HepG2 (cell line): ENCODE measurements at regions of chr2 and their contacts with region 1.

Region 1: GRCh38 chr2:105576440-105577252 is 168.1 kb upstream of the NCK2 start:
- DNase-seq: peak; percentile 54
- ATAC-seq: peak; percentile 77
- H3K4me3 ChIP-seq: 0 out of 6 replicates have a peak overlapping the region, but pooled peaks of 1 of the 3 experiments have one; percentile 21
- H3K27ac ChIP-seq: no peak overlapping the region
- H3K4me1 ChIP-seq: peaks cover 13% of the 10 kb centered on the region
- H3K27me3 ChIP-seq: peaks cover 2 to 22% of the 10 kb centered on the region in 2 experiments; a peak in 4 of 5 replicates
- CTCF ChIP-seq: peak; percentile 73
- EP300 ChIP-seq: no peak
- POLR2A ChIP-seq: no peak
- RAD21 ChIP-seq: no peak; the same call in 1 of the 2 replicates

Region 2: GRCh38 chr2:104969564-104969963 is 607.1 kb before region 1 on chr2:
- CTCF ChIA-PET with region 1: no interaction called
- POLR2A ChIA-PET with region 1: no interaction called
- in situ Hi-C with region 1: no loop called
- intact Hi-C with region 1: no loop called
- DNase-seq: no peak
- ATAC-seq: no peak; the same call in 2 of the 3 replicates
- H3K4me3 ChIP-seq: no peak overlapping the region
- H3K27ac ChIP-seq: no peak overlapping the region
- H3K4me1 ChIP-seq: no peaks in the 10 kb centered on the region
- H3K27me3 ChIP-seq: peaks cover 0 to 14% of the 10 kb centered on the region in 2 experiments; a peak in 1 of 5 replicates
- CTCF ChIP-seq: no peak
- EP300 ChIP-seq: no peak
- POLR2A ChIP-seq: no peak
- RAD21 ChIP-seq: no peak

Region 3: DNA sequence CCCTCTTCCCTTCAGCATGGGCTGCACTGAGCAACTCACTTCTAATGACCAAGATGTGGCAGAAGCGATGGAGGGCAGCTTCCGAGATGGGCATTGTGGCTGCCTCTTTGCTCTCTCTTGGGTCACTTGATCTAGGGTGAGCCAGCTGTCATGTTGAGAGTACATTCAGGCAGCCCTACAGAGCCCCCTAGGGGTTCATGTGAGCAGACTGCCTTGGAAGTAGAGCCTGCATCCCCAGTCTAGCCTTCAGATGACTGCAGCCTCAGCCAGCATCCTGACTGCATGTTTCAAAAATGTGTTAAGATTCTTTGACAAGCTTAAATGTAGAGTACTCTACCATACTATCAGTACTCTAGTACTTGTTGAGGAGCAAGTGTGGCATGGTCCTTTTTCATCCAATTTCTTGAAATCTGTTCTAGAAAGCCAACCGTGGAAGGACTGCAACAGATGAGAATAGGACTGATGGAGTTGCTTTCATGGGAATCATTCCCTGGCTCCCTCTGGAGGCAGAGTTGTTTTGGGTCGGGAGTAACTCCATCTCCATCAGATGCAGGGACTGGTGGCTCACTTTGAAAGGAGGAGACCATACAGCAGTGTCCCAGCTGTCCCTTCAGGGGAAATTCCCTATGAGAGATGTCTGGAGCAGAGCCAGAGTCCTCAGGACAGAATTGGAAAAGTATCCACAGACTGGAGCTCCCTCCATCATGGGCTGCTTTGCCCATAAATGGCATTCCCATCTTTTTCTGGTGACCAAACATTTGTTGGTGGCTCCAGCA is 312.2 kb after region 1 on chr2:
- CTCF ChIA-PET with region 1: no interaction called
- POLR2A ChIA-PET with region 1: no interaction called
- in situ Hi-C with region 1: loop called (anchors 5 kb)
- intact Hi-C with region 1: loop called (anchors 1 kb)
- DNase-seq: peak; percentile 58
- ATAC-seq: peak; percentile 88
- H3K4me3 ChIP-seq: no peak overlapping the region
- H3K27ac ChIP-seq: no peak overlapping the region
- H3K4me1 ChIP-seq: no peaks in the 10 kb centered on the region
- H3K27me3 ChIP-seq: no peaks in the 10 kb centered on the region
- CTCF ChIP-seq: peak; percentile 66
- EP300 ChIP-seq: no peak
- POLR2A ChIP-seq: no peak
- RAD21 ChIP-seq: peak; percentile 70; the same call in 1 of the 2 replicates

Region 4: DNA sequence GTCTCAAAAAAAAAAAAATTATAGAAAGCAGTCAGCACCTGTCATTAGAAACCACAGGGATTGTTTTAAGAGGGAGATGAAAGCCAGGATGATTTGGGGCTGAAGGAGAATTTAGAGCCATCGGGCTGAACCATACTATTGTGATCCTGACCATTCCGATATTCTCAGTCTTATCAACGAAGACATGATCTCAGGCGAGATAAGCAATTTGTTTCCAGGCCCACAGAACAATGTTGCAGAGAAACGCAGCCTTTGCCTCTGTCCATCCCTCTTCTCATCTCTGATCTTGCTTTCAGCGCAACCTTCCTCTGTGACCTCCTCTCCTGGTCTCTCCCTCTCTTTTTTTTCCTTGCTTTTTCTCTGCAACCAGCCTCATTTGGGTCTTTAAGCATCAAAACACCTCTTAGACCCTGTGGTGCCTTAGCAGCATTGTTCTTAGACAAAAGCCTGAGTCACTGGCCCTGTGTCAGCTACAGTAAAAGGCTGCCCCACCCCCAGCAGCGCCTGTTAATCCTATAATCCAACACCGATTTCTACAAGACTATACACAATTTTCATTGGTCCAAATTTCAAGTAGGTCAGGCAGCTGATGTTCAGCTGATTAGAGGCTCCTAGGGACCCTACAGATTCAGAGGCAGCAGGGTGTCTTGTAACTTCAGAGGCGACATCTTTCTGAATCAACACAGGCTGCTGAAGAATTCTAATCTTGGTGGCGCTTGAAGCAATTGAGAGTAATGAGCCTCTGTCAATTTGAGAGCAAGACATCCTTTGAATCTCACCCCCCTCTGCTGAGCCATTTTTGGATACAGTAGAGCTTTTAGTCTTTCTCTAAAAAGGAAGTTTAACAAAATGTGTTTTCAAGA is 374.1 kb after region 1 on chr2:
- CTCF ChIA-PET with region 1: no interaction called
- POLR2A ChIA-PET with region 1: no interaction called
- in situ Hi-C with region 1: no loop called
- intact Hi-C with region 1: no loop called
- DNase-seq: no peak
- ATAC-seq: no peak
- H3K4me3 ChIP-seq: no peak overlapping the region
- H3K27ac ChIP-seq: no peak overlapping the region
- H3K4me1 ChIP-seq: no peaks in the 10 kb centered on the region
- H3K27me3 ChIP-seq: peaks cover 3 to 44% of the 10 kb centered on the region in 2 experiments; a peak in 3 of 5 replicates
- CTCF ChIP-seq: no peak
- EP300 ChIP-seq: no peak
- POLR2A ChIP-seq: no peak
- RAD21 ChIP-seq: no peak

Region 5: GRCh38 chr2:105969555-105969954 is 392.9 kb after region 1 on chr2:
- CTCF ChIA-PET with region 1: no interaction called
- POLR2A ChIA-PET with region 1: no interaction called
- in situ Hi-C with region 1: no loop called
- intact Hi-C with region 1: loop called (anchors 1 kb)
- DNase-seq: peak; percentile 14
- ATAC-seq: peak; percentile 80
- H3K4me3 ChIP-seq: no peak overlapping the region
- H3K27ac ChIP-seq: no peak overlapping the region
- H3K4me1 ChIP-seq: peaks cover 6% of the 10 kb centered on the region; the same call in 1 of the 2 replicates
- H3K27me3 ChIP-seq: peaks cover 4 to 33% of the 10 kb centered on the region in 2 experiments; a peak in 4 of 5 replicates
- CTCF ChIP-seq: peak; percentile 74
- EP300 ChIP-seq: no peak
- POLR2A ChIP-seq: no peak
- RAD21 ChIP-seq: 0 out of 2 replicates have a peak, but pooled peaks have one; percentile 16